Activated CD8-positive, alpha-beta memory T cell treated with anti-CD3 and anti-CD28 coated beads, Interleukin-2, amount 10 ng/mL, durations not matched to agents 7 days and 5 days (primary cell): ENCODE measurements at regions of chr3 and their contacts with region 1.

Region 1: GRCh38 chr3:20039766-20040475 is at the start of gene KAT2B:
- DNase-seq: peak; percentile 89
- ATAC-seq: peak; percentile 63
- H3K4me3 Mint-ChIP-seq: peak within 1 kb of the TSS; percentile 93
- H3K27ac Mint-ChIP-seq: peak within 1 kb of the TSS; percentile 97
- H3K4me1 Mint-ChIP-seq: peaks cover 48% of the 10 kb centered on the region
- H3K27me3 Mint-ChIP-seq: no peaks in the 10 kb centered on the region
- total RNA-seq, gene KAT2B: 98.2 to 120 TPM

Region 2: DNA sequence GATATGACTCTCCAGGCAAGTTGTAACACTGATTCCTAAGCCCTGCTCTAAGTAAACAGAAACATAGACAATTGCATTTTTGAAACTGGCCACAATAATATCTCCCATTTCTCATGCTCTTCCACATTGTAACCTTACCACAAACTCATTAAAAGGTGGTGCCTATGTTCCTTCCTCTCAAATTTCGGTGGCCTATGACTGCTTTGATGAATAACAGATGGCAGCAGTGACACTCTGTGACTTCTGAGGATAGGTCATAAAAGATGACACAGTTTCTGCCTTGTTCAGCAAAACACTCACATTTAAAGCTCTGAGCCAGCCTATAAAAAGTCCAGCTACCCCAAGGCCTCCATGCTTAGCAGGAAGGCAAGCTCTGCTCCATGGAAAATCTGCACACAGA is 301.1 kb before region 1 on chr3:
- CTCF ChIA-PET with region 1: no interaction called
- DNase-seq: no peak
- ATAC-seq: no peak
- H3K4me3 Mint-ChIP-seq: no peak overlapping the region
- H3K27ac Mint-ChIP-seq: no peak overlapping the region
- H3K4me1 Mint-ChIP-seq: no peaks in the 10 kb centered on the region
- H3K27me3 Mint-ChIP-seq: no peaks in the 10 kb centered on the region

Region 3: GRCh38 chr3:20051123-20051806 is 11.3 kb after region 1 on chr3:
- CTCF ChIA-PET with region 1: interaction called, 15 read pairs
- DNase-seq: no peak
- ATAC-seq: no peak
- H3K4me3 Mint-ChIP-seq: no peak overlapping the region
- H3K27ac Mint-ChIP-seq: no peak overlapping the region
- H3K4me1 Mint-ChIP-seq: peaks cover 55% of the 10 kb centered on the region
- H3K27me3 Mint-ChIP-seq: no peaks in the 10 kb centered on the region

Region 4: DNA sequence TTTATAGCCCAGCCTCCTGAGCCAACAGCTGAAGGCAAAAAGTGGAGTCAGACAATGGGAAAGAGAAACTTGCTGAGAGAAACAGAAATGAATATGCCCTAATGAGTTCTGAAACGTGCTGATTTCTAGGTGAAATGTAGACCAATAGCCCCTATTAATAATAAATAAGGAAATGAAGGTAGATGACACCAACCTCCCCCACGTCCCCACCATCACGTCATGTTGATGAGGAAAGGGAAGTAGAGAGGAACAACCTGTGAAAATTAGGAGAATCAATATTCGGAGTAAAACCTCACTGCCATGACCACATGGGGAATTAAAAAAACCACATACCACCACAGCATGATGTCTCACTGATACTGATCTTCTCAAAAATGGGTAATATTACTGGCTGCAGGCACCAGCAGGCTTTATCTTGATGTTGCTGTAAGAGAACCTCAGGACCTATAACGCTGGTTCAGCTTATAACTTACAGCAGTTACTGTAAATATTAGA is 64.3 kb after region 1 on chr3:
- CTCF ChIA-PET with region 1: interaction called, 12 read pairs
- DNase-seq: peak; percentile 88
- ATAC-seq: peak; percentile 88
- H3K4me3 Mint-ChIP-seq: peak overlapping the region; percentile 33
- H3K27ac Mint-ChIP-seq: peak overlapping the region; percentile 85
- H3K4me1 Mint-ChIP-seq: peaks cover 79% of the 10 kb centered on the region
- H3K27me3 Mint-ChIP-seq: no peaks in the 10 kb centered on the region